ENCODE measurements at regions of chr10 and their contacts with region 1.

Region 1: DNA sequence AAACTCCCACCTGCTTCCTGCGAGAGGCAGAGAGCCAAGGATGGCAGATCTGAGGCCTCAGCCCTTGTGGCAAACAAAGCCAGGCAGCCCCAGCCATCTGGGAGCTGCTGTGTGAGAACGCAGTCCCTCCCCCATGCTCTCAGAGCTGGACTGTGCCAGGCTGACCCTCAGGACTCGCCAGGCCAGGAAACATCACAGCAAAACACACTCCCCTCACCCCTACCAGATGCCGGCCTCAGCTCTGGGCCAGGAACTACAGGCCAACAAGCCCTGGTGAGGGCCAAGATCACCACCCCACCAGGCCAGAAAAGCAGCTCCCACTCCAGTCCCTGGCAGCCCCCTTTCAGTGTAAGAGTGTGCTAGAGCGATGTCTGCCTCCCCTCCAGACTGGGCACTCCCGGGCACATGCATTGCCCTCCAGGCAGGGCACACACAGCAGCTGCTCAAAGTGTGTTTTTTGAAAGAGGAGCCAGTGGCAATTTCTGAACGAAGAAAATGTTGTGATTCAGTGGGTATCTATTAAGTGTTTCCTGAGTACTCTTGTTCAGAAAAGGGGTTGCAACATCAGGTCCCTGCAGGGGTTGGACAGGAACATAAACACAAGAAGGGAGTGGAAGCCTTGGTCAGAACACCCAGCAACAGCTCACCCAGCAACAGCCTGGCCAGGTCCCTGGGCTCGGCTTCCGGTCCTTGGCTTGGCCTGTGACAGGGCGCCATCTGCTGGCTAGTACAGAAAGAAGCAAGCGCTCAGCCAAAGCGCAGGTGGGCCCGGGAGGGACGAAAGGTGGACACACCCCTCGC is 18.3 kb downstream of the LRRC20 start:
- DNase-seq: peak; percentile 65
- ATAC-seq: peak; percentile 96
- H3K4me3 ChIP-seq: no peak overlapping the region
- H3K27ac ChIP-seq: peak overlapping the region; percentile 69
- H3K4me1 ChIP-seq: peaks cover 18% of the 10 kb centered on the region
- H3K27me3 ChIP-seq: no peaks in the 10 kb centered on the region
- CTCF ChIP-seq: peak; percentile 84 to 96 (median 86); a peak in 5 of 6 replicates
- EP300 ChIP-seq: no peak
- POLR2A ChIP-seq: no peak
- RAD21 ChIP-seq: peak; percentile 100

Region 2: DNA sequence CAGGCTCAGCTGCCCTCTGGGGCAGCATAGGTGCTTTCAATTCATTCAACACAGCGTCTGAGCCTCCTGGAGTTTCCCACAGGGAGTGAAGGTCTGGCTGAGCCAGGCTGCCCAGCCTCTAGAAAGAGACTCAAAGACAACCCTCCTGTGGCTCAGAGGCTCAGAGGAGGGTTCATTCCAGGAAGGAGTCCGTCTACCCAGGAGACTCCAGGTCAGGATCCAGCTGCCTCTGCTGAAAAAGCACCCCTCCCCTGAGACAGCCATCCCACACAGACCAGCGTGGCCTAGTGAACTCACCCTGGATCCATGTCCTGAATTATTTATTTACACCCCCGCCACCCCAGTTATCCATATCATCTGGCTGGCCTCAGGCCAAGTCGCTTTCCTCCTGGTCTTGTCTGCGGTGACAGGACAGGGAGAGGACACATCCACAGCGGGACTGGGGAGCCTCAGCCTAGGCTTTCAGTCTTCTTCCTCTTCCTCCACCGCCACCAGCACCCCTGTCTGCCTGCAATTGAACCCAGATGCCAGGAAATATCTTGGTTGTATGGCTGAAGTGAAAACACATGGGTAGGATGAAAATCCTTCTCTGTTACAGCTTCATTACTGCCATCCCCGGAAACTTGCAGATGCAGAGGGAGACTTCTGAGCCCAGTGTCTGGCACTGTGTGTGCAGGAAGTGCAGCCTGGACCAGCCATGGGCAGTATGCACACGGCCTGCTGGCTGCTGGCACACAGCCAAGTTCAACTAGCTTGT is 606.4 kb before region 1 on chr10:
- CTCF ChIA-PET with region 1: no interaction called
- POLR2A ChIA-PET with region 1: no interaction called
- RAD21 ChIA-PET with region 1: no interaction called
- SMC1A ChIA-PET with region 1: no interaction called
- in situ Hi-C with region 1: no loop called
- intact Hi-C with region 1: no loop called
- DNase-seq: no peak
- ATAC-seq: no peak
- H3K4me3 ChIP-seq: no peak overlapping the region
- H3K27ac ChIP-seq: no peak overlapping the region
- H3K4me1 ChIP-seq: peaks cover 5% of the 10 kb centered on the region; the same call in 1 of the 2 replicates
- H3K27me3 ChIP-seq: peaks cover 2 to 3% of the 10 kb centered on the region in 2 experiments; a peak in 3 of 4 replicates
- CTCF ChIP-seq: no peak
- EP300 ChIP-seq: no peak
- POLR2A ChIP-seq: no peak
- RAD21 ChIP-seq: no peak

Region 3: DNA sequence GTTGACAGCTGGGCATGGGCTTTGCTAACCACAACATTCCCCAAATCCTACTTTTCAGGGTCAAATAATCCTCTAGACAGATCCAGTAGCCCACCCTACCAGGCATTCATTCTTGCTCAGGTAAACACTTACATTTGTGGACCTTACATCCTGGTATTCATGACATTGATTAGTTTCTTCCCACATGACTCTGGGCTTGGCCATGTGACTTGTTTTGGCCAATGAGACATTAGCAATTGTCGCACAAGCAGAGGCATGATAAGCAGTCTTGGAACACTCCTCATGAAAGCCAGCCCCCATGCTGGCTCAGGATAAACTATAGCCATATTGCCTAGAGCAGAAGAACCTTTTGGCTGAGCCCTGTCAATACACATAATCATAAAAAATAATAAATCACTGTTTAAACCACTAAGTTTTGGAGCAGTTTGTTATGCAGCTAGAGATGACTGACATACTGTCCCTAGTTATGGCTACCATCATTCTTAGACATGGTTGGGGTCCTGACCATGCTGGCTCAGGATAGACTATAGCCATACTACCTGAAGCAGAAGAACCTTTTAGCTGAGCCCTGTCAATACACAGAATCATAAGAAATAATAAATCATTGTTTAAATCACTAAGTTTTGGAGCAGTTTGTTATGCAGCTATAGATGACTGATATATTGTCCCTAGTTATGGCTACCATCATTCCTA is 568.8 kb before region 1 on chr10:
- CTCF ChIA-PET with region 1: no interaction called
- POLR2A ChIA-PET with region 1: no interaction called
- RAD21 ChIA-PET with region 1: no interaction called
- SMC1A ChIA-PET with region 1: no interaction called
- in situ Hi-C with region 1: no loop called
- intact Hi-C with region 1: no loop called
- DNase-seq: no peak
- ATAC-seq: no peak
- H3K4me3 ChIP-seq: no peak overlapping the region
- H3K27ac ChIP-seq: no peak overlapping the region
- H3K4me1 ChIP-seq: no peaks in the 10 kb centered on the region
- H3K27me3 ChIP-seq: no peaks in the 10 kb centered on the region; a peak in 2 of 4 replicates
- CTCF ChIP-seq: no peak
- EP300 ChIP-seq: no peak
- POLR2A ChIP-seq: no peak
- RAD21 ChIP-seq: no peak

Region 4: GRCh38 chr10:70051848-70052247 is 312.3 kb before region 1 on chr10:
- CTCF ChIA-PET with region 1: no interaction called
- POLR2A ChIA-PET with region 1: no interaction called
- RAD21 ChIA-PET with region 1: no interaction called
- SMC1A ChIA-PET with region 1: no interaction called
- in situ Hi-C with region 1: no loop called
- intact Hi-C with region 1: no loop called
- DNase-seq: no peak
- ATAC-seq: no peak
- H3K4me3 ChIP-seq: no peak overlapping the region
- H3K27ac ChIP-seq: no peak overlapping the region
- H3K4me1 ChIP-seq: no peaks in the 10 kb centered on the region
- H3K27me3 ChIP-seq: peaks cover 9% of the 10 kb centered on the region in 2 experiments
- CTCF ChIP-seq: no peak
- EP300 ChIP-seq: no peak
- POLR2A ChIP-seq: no peak
- RAD21 ChIP-seq: no peak

Region 5: DNA sequence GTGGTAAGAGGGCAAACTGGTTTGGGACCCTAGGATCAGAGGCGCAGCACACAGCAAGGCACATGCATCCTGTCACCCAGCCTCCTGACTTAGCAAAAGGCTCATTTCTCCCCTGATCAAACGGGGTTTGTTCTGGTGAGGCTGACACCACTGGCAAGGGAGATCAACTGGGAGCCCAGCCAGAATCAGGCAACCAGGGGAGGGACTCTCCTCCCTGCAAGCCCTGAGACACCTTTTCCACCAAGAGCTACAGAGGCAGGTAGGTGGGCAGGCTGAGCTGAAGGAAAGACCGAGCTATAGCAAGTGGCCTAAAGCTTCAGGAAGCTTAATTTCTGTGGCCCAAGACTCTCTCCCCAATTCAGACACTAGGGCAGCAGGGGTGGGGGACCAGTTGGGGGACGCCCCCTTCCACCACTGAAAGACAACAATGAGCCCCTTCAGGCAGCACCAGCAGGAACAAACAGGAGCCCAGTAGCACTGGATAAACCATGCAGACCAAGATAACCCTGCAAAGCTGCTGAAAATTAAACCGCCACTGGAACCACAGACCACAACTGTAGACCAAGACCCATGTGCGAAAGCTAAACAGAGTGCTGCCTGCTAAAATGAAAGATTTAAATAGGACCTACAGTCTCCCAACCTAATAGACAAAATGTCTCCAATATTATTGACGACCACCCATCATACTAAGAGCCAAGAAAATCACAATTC is 166.8 kb before region 1 on chr10:
- CTCF ChIA-PET with region 1: interaction called, 11 read pairs
- POLR2A ChIA-PET with region 1: no interaction called
- RAD21 ChIA-PET with region 1: interaction called, 4 read pairs
- SMC1A ChIA-PET with region 1: interaction called, 5 read pairs
- in situ Hi-C with region 1: no loop called
- intact Hi-C with region 1: no loop called
- DNase-seq: no peak
- ATAC-seq: no peak
- H3K4me3 ChIP-seq: no peak overlapping the region
- H3K27ac ChIP-seq: no peak overlapping the region
- H3K4me1 ChIP-seq: no peaks in the 10 kb centered on the region; the same call in 1 of the 2 replicates
- H3K27me3 ChIP-seq: no peaks in the 10 kb centered on the region
- CTCF ChIP-seq: no peak
- EP300 ChIP-seq: no peak
- POLR2A ChIP-seq: no peak
- RAD21 ChIP-seq: no peak

Region 6: DNA sequence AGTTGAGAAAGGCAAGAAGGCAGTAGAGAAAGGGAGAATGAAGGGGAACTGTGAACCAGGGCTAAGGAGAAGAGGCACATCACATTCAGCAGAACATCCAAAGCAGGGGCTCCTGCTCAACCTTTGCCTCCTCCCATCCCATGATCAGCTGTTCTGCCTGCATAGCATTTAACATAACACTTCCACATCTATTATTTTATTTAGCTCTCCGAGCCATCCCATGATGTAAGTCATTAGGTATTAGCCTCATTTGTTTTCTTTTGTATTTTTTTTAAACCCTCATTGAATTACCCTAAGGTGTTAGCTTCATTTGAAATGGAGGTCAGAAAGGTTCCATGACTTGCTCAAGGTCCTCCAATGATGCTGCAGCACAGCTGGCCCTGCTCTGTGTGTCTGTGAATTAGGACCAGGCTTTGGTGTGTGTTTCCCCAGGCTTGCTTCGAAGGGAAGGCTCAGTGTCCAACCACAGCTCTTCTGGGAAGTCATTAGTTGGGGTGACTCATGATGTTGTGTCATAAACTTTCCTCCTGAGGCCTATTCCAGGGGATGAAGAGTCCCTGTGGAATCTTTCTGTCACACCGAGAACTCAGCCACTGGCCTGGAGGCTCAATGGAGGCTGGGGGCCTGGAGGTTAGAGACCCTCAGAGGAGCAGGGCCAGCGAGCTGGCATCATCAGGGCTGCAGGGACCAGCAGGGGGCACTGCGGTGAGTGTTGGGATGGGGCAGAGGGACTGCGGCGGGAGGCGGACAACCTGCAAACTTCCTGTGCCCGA is 96.8 kb before region 1 on chr10:
- CTCF ChIA-PET with region 1: interaction called, 756 read pairs
- POLR2A ChIA-PET with region 1: interaction called, 11 read pairs
- RAD21 ChIA-PET with region 1: interaction called, 180 read pairs
- SMC1A ChIA-PET with region 1: interaction called, 274 read pairs
- in situ Hi-C with region 1: loop called (anchors 5 kb)
- intact Hi-C with region 1: loop called (anchors 2 kb)
- DNase-seq: no peak
- ATAC-seq: peak; percentile 35
- H3K4me3 ChIP-seq: no peak overlapping the region
- H3K27ac ChIP-seq: no peak overlapping the region
- H3K4me1 ChIP-seq: peaks cover 16% of the 10 kb centered on the region
- H3K27me3 ChIP-seq: no peaks in the 10 kb centered on the region
- CTCF ChIP-seq: peak; percentile 10 to 41 (median 27); a peak in 4 of 6 replicates
- EP300 ChIP-seq: no peak
- POLR2A ChIP-seq: no peak
- RAD21 ChIP-seq: no peak

Region 7: GRCh38 chr10:70324339-70324861 is 39.8 kb before region 1 on chr10:
- CTCF ChIA-PET with region 1: interaction called, 10 read pairs
- POLR2A ChIA-PET with region 1: no interaction called
- RAD21 ChIA-PET with region 1: interaction called, 11 read pairs
- SMC1A ChIA-PET with region 1: interaction called, 7 read pairs
- in situ Hi-C with region 1: no loop called
- intact Hi-C with region 1: no loop called
- DNase-seq: no peak
- ATAC-seq: peak; percentile 89
- H3K4me3 ChIP-seq: no peak overlapping the region
- H3K27ac ChIP-seq: 0 out of 2 replicates have a peak overlapping the region, but pooled peaks have one; percentile 33
- H3K4me1 ChIP-seq: peaks cover 23% of the 10 kb centered on the region
- H3K27me3 ChIP-seq: no peaks in the 10 kb centered on the region
- CTCF ChIP-seq: no peak
- EP300 ChIP-seq: no peak
- POLR2A ChIP-seq: no peak
- RAD21 ChIP-seq: no peak

Region 8: GRCh38 chr10:70348228-70348850 is 15.8 kb before region 1 on chr10:
- CTCF ChIA-PET with region 1: interaction called, 86 read pairs
- POLR2A ChIA-PET with region 1: interaction called, 5 read pairs
- RAD21 ChIA-PET with region 1: interaction called, 74 read pairs
- SMC1A ChIA-PET with region 1: interaction called, 77 read pairs
- in situ Hi-C with region 1: no loop called
- intact Hi-C with region 1: no loop called
- DNase-seq: no peak
- ATAC-seq: peak; percentile 94
- H3K4me3 ChIP-seq: no peak overlapping the region
- H3K27ac ChIP-seq: no peak overlapping the region
- H3K4me1 ChIP-seq: peaks cover 11% of the 10 kb centered on the region
- H3K27me3 ChIP-seq: no peaks in the 10 kb centered on the region
- CTCF ChIP-seq: peak; percentile 61 to 65 (median 64)
- EP300 ChIP-seq: no peak
- POLR2A ChIP-seq: no peak
- RAD21 ChIP-seq: peak; percentile 68

Measured in GM12878 (cell line).